BJ (cell line): ENCODE measurements at regions of chr14 and their contacts with region 1.

Region 1: GRCh38 chr14:103444837-103445524 is 59.8 kb downstream of the MARK3 start:
- DNase-seq: no peak
- H3K4me3 ChIP-seq: no peak overlapping the region
- H3K27me3 ChIP-seq: no peaks in the 10 kb centered on the region
- CTCF ChIP-seq: no peak

Region 2: DNA sequence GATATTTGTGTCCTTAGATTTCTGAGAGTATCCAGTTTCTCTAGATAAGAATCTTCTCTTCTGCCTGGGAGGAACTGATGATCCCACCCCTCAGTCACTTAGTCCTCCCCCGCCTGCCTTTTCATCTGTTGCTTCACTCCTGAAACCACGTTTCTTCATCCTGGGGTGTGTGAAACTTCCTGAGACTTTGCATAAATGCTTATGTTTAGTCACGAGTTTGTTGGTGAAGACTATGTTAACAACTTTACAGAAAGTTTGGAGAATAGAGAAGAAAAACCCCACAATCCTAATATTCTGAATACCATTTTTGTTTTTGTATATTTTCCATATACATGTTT is 26.5 kb before region 1 on chr14:
- CTCF ChIA-PET with region 1: no interaction called
- POLR2A ChIA-PET with region 1: interaction called, 13 read pairs
- DNase-seq: peak; percentile 62
- H3K4me3 ChIP-seq: no peak overlapping the region
- H3K27me3 ChIP-seq: no peaks in the 10 kb centered on the region
- CTCF ChIP-seq: no peak